Cardiac septum (tissue), 1 donor: ENCODE measurements at regions of chr9 and their contacts with region 1.

Region 1: DNA sequence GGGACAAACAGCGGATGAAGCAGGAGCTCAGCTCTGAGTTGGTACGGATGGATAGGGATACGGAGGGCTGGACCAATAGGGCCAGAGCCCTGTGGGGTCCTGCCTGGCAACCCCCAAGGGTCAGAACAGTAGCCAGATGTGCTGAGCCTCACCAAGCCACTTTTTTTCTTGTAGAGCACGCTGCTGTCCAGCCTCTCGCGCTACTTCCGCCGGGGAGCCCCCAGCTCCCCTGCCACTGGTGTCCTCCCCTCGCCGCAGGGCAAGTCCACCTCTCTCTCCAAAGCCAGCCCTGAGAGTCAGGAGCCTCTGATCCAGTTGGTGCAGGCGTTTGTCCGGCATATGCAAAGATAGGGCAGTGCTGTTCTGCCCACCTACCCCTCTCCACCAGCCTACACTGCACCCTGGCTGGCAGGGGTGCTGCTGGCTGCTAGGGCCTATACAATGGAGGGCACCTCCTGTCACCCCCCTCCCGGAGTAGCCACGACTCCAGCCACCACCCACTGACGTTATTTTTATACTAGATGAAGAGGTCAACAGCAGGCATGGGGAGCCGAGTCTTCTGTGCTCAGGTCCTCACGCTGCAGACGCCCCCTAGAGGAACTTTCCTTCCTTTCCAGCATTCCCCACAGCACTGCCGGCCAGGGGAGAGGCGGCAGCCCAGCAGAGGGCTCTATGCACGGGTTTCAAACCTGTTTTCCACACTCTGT is 21.6 kb downstream of the SH3GLB2 start:
- DNase-seq: no peak

Region 2: GRCh38 chr9:128947422-128948301 is 58.8 kb before region 1 on chr9 and contains the starts of genes DOLK and NUP188:
- intact Hi-C with region 1: loop called (anchors 5 kb)
- DNase-seq: peak; percentile 99
- total RNA-seq, gene DOLK: 9.8 TPM
- total RNA-seq, gene NUP188: 36.3 TPM